ENCODE measurements at regions of chr12 and their contacts with region 1.

Region 1: DNA sequence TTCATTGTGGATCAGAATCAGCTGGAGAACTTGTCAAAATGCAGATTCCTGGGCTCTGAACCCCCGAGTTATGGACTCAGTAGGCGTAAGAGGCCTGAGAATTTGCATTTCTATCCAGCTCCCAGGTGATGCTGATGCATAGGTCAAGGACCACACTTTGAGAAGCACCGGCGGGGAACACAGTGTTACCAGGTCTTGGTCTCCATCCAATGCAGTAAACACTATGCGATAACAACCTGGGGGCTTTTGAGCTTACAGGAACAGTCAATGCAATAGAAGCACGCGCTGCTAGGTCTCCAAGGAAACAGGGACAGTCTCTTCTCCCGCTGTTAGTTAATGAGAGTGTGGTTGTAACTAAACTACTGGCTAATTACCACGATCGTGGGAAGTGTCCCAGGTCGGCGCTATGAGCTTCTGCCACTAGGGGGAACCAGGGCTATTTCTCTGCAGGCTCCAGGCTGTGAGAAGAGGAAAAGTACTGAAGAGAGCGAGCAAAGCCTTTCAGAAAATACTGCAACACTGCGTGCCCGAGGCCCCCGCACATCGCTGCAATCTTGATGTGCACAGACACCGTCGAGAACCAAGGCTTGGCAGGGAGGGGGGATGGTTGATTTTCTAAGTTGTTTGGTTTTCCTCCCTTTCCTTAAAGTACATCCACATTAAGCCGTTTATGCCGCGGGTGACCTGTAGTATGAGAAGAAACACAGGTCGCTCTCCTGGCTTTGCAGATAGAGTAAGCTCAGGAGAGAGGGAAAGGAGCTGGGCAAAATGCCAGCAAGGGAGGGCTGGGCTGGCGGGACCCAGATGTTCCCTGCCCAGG is 52.0 kb upstream of the KCNA1 start:
- DNase-seq: peak; percentile 73 to 97 (median 87)

Region 2: GRCh38 chr12:4969405-4969804 is 111.7 kb after region 1 on chr12:
- intact Hi-C with region 1: no loop called
- DNase-seq: no peak

Region 3: DNA sequence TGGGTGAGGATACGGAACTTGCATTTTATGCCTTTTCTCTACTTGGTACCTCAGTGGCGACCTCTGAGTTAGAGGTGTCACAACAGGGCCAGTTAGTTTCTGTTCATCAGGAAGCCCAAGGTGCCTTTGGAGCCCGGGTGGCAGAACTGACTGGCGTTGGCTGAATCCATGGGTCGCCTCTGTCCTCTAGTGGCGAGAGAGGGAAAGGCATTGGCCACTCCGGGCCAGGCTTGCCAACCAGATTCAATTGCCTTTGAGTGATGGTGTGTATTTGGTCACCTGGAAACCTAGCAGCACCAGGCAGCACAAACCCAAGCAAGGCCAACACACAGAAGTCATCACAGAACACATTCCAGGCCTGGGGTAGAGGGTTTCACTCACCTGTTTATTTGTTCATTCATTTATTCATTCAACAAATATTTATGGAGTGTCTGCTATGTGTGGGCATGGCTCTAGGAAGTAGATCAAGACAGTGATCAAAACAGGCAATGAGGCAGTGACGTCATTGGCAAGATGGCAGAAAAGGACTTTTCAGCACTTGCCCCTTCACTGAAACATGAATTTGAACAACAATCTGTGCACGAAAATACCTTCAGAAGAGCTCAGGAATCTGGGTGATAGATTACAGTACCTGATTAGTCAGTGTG is 145.5 kb after region 1 on chr12:
- intact Hi-C with region 1: loop called (anchors 1 kb)
- DNase-seq: peak; percentile 55 to 96 (median 80)

Region 4: GRCh38 chr12:5083955-5084849 is 226.5 kb after region 1 on chr12:
- intact Hi-C with region 1: loop called (anchors 1 kb)
- DNase-seq: peak in 3 of 10 donors; percentile 32 to 45 (median 39)